ENCODE measurements at regions of chr13 and their contacts with region 1.

Region 1: GRCh38 chr13:109243311-109243951 is 543.0 kb downstream of the IRS2 start:
- DNase-seq: peak; percentile 79
- H3K4me3 Mint-ChIP-seq: peak overlapping the region; percentile 67
- H3K27ac Mint-ChIP-seq: peak overlapping the region; percentile 89
- H3K4me1 Mint-ChIP-seq: peaks cover 34% of the 10 kb centered on the region
- H3K27me3 Mint-ChIP-seq: no peaks in the 10 kb centered on the region
- CTCF ChIP-seq: no peak

Region 2: GRCh38 chr13:109151255-109151654 is 92.2 kb before region 1 on chr13:
- CTCF ChIA-PET with region 1: interaction called, 3 read pairs
- POLR2A ChIA-PET with region 1: interaction called, 12 read pairs
- intact Hi-C with region 1: loop called (anchors 1 kb)
- DNase-seq: peak; percentile 49
- H3K4me3 Mint-ChIP-seq: no peak overlapping the region
- H3K27ac Mint-ChIP-seq: peak overlapping the region; percentile 77
- H3K4me1 Mint-ChIP-seq: peaks cover 57% of the 10 kb centered on the region
- H3K27me3 Mint-ChIP-seq: no peaks in the 10 kb centered on the region
- CTCF ChIP-seq: no peak

Region 3: GRCh38 chr13:109381546-109382180 is 138.2 kb after region 1 on chr13:
- CTCF ChIA-PET with region 1: no interaction called
- POLR2A ChIA-PET with region 1: no interaction called
- intact Hi-C with region 1: no loop called
- DNase-seq: peak; percentile 10
- H3K4me3 Mint-ChIP-seq: no peak overlapping the region
- H3K27ac Mint-ChIP-seq: peak overlapping the region; percentile 88
- H3K4me1 Mint-ChIP-seq: peaks cover 26% of the 10 kb centered on the region
- H3K27me3 Mint-ChIP-seq: no peaks in the 10 kb centered on the region
- CTCF ChIP-seq: no peak

Measured in MCF 10A (cell line).